IMR-90 (cell line): ENCODE measurements at regions of chr5 and their contacts with region 1.

Region 1: DNA sequence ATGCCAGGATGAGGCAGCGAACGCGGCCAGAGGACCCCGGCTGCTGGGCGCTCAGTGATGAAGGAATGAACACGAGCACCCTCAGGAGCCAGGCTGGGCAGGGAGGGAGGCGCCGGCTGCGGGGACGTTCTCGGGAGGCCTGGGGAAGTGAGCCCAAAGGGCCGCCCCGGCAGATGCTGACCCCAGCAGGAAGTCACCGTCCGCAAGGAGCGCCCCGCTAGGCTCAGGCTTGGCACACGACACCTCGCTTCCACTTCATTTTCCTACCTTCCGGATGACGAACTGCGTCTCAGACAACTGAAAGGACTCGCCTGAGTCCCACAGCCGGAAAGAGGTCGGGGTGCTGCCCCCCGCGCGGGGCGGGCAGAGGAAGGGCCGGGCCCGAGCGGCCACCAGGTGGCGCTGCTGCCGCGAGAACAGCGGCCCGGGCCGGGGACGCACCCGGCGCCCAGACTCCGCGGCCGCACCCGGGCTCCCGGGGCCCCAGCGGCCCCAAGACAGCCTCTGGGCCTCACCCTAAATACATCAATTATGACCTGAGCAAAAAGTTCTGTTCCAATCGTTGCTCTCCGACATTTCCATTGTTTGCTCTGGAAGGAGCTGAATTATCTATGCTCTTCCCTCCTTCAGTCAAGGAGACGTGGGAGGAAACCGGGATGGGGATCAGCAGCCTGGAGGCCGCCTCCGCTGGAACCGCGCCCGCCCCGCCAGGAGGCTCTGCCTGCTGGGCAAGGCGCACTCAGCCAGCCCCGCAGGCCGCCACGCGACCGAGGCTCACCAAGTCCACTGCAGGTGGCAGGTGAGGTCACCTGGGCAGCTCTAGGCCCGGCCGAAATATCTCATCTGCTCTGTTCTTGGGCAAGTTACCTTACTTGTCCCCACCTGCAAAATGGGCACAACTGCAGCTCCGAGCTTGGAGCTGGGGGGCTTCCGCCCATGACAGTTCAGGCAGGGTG is 107.0 kb downstream of the ZNF354C start:
- DNase-seq: peak; percentile 27
- ATAC-seq: peak; percentile 93
- H3K4me3 ChIP-seq: no peak overlapping the region
- H3K27ac ChIP-seq: no peak overlapping the region
- H3K4me1 ChIP-seq: no peaks in the 10 kb centered on the region
- H3K27me3 ChIP-seq: no peaks in the 10 kb centered on the region
- CTCF ChIP-seq: peak; percentile 91
- POLR2A ChIP-seq: 0 out of 2 replicates have a peak, but pooled peaks have one; percentile 16
- RAD21 ChIP-seq: peak; percentile 90

Region 2: DNA sequence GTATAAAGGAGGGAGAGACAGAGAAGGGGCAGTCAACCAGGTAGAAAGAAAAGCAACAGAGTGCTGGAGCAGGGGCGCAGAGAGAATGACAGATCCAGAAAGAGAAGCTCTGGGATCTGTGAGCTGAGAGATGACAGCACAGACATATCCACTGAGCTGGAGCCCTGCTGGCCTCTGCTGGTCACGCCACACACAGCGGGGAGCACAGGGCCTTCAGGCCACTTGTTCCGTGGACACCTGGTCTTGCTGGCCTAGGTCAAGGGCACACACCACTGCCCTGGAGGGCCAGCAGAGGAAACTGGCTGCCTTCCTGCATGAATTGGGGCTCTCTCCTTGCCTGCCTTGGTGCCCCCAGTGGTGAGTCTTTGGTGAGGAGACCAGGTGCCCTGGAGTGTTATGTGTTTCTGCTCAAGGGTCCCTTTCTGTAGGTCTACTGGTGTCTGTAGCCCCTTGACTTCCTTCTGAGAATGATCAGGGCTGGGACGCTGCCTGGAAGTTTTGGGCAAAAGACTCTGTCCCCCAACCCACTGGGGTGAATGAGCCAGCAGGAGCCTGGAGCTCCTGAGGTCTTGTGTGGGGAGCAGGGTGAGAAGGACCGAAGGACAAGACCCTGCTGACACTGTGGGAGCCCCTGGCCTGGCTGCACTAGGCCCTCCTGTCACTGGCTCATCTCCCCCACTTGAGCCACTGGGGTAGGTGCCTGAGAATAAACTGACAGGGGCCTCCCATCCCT is 237.3 kb after region 1 on chr5:
- CTCF ChIA-PET with region 1: interaction called, 14 read pairs
- POLR2A ChIA-PET with region 1: no interaction called
- dilution Hi-C with region 1: no loop called
- in situ Hi-C with region 1: loop called (anchors 10 kb)
- intact Hi-C with region 1: no loop called
- DNase-seq: peak; percentile 42
- ATAC-seq: peak; percentile 94
- H3K4me3 ChIP-seq: no peak overlapping the region
- H3K27ac ChIP-seq: no peak overlapping the region
- H3K4me1 ChIP-seq: no peaks in the 10 kb centered on the region; the same call in 1 of the 2 replicates
- H3K27me3 ChIP-seq: no peaks in the 10 kb centered on the region
- CTCF ChIP-seq: peak; percentile 57
- POLR2A ChIP-seq: no peak
- RAD21 ChIP-seq: peak; percentile 70

Region 3: DNA sequence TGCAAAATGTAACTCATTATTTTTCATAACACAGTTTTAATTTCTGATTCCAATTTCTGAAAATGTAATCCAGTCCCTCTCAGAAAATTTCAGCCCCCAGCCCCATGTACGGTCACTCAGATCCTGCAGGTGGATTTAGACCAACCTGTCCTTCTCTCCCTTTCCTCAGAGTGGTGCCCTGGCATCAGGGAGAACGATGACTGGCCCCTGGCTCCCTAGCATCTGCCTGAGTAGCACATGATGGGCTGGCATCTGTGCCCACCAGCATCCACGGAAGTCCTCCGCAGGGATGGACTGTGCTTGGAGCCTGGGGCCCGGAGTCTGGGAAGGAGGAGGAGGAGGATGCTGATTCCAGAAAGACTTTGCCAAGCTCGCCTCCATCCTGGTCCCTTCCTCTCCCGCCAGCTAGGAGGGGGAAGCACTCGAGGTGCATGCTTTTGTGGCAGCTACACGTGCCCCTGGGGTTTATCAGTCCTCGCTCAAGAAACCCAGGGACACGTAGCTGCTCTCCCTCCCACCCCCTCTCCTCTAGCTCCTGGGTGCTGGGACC is 328.8 kb after region 1 on chr5:
- CTCF ChIA-PET with region 1: interaction called, 5 read pairs
- POLR2A ChIA-PET with region 1: no interaction called
- dilution Hi-C with region 1: no loop called
- in situ Hi-C with region 1: loop called (anchors 5 kb)
- intact Hi-C with region 1: loop called (anchors 1 kb)
- DNase-seq: no peak
- ATAC-seq: no peak
- H3K4me3 ChIP-seq: no peak overlapping the region
- H3K27ac ChIP-seq: no peak overlapping the region
- H3K4me1 ChIP-seq: peaks cover 2% of the 10 kb centered on the region; the same call in 1 of the 2 replicates
- H3K27me3 ChIP-seq: peaks cover 8% of the 10 kb centered on the region
- CTCF ChIP-seq: 0 out of 2 replicates have a peak, but pooled peaks have one; percentile 8
- POLR2A ChIP-seq: no peak
- RAD21 ChIP-seq: peak; percentile 11; the same call in 1 of the 2 replicates